GM10248 (cell line): ENCODE measurements at regions of chr7 and their contacts with region 1.

Region 1: GRCh38 chr7:2863461-2864066 is 19.5 kb upstream of the GNA12 start:
- DNase-seq: peak; percentile 86
- CTCF ChIP-seq: no peak

Region 2: GRCh38 chr7:2465928-2466327 is 397.6 kb before region 1 on chr7:
- CTCF ChIA-PET with region 1: no interaction called
- POLR2A ChIA-PET with region 1: no interaction called
- DNase-seq: no peak
- CTCF ChIP-seq: no peak

Region 3: DNA sequence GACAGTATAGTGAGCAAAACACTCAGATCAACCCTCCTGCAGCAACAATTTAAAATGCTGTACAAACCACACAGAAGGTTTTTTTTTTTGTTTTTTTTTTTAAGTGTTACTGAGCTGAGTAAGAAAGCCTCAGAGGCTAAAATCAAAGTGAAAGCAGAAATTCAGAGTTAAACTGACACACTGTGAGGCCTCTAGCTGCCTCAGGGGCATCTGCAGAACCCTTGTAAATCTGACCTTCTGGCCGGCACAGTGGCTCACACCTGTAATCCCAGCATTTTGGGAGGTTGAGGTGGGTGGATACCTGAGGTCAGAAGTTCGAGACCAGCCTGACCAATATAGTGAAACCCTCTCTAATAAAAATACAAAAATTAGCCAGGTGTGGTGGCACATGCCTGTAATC is 12.1 kb before region 1 on chr7:
- CTCF ChIA-PET with region 1: interaction called, 31 read pairs
- POLR2A ChIA-PET with region 1: interaction called, 3 read pairs
- DNase-seq: peak; percentile 60
- CTCF ChIP-seq: no peak

Region 4: GRCh38 chr7:2876031-2876731 is 12.6 kb after region 1 on chr7:
- CTCF ChIA-PET with region 1: interaction called, 17 read pairs
- POLR2A ChIA-PET with region 1: no interaction called
- DNase-seq: no peak
- CTCF ChIP-seq: no peak

Region 5: DNA sequence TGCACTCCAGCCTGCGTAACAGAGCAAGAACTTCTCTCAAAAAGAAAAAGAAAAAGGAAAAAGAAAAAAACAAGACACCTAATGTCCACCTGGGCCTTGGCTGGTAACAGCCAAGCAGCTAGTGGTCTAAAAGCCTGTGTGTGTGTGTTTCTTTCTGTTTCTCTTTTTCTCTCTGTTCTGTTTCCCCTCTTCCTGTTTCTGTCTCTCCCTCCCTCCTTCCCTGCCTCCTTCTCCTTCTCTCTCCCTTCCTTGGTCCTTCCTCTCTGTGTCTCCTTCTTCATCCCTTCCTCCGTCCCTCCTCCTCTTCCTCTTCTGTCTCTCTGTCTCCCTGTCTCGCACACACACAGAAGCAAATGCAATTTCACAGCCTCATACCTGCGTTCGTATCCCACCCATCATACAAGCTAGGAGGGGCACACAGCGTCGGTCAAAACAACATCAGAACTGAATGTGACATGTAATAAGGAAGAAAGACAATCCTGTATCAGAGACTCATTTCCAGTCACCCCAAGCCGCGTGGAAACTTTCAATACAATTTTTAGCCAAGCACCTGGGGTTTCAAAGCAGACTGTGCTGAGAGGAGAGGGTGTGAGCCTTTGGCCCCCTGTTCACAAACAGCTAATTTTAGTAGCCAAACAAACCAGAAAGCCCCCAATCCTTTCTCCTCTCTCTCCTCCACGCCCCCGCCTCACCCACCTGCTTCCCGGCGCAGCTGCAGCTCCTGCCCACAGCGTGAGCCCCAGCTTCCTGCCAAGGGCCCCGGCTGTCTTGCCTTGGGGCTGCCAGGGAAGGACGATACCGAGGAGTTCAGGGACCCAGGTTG is 30.8 kb after region 1 on chr7:
- CTCF ChIA-PET with region 1: interaction called, 22 read pairs
- POLR2A ChIA-PET with region 1: interaction called, 10 read pairs
- DNase-seq: peak; percentile 76
- CTCF ChIP-seq: no peak

Region 6: GRCh38 chr7:3078514-3078913 is 214.9 kb after region 1 on chr7:
- CTCF ChIA-PET with region 1: no interaction called
- POLR2A ChIA-PET with region 1: no interaction called
- DNase-seq: no peak
- CTCF ChIP-seq: no peak

Region 7: DNA sequence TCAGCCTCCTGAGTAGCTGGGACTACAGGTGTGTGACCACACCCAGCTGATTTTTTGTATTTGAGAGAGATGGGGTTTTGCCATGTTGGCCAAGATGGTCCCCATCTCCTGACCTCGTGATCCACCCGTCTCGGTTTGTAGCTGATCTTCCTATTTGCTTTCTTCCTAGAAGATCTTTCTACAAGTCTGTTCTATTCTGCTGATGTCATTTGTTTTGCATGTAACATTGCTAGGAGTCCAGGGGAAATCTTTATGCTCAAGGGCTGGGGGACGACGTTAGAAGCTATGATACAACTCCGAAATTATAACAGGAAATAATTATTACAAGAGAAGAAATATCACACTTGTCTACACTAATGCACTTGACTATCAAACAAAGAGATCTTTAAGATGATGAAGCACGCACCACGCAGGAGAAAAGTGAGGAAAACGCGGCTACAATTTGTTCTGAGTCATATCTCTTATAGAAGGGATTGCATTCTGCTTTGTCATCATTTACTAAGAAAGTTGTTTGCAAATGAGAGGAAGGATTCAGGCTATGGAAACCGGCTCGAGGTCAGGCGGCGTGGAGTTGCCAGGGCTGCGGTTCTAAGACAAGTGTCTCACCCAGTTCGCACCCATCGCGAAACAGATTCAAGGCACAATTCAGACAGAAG is 283.1 kb after region 1 on chr7:
- CTCF ChIA-PET with region 1: interaction called, 15 read pairs
- POLR2A ChIA-PET with region 1: no interaction called
- DNase-seq: no peak
- CTCF ChIP-seq: no peak

Region 8: DNA sequence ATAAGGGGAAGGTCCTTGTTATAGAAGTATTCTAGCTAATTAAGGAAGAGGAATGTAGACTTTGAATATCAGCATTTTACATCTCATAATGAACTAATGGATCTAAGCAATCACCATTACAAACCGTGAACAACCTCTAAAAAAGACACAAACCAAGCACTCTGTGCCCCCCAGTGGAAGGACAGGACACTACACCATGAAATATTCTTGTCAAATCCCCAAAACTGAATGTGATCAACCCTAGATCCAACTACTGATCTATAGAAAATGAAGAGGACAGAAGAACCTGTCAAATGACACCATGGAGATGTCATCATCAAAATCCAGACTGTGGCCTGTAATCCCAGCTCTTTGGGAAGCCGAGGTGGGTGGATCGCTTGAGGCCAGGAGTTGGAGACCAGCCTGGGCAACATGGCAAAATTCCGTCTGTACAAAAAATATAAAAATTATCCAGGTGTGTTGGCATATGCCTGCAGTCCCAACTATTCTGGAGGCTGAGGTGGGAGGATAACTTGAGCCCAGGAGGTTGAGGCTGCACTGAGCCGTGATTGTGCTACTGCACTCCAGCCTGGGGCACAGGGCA is 291.4 kb after region 1 on chr7:
- CTCF ChIA-PET with region 1: interaction called, 36 read pairs
- POLR2A ChIA-PET with region 1: no interaction called
- DNase-seq: peak; percentile 68
- CTCF ChIP-seq: peak; percentile 73